Mammary epithelial cell (primary cell): ENCODE measurements at regions of chr13 and their contacts with region 1.

Region 1: GRCh38 chr13:30998136-30999088 is 66.0 kb downstream of the TEX26 start:
- DNase-seq: peak; percentile 21
- H3K4me3 ChIP-seq: no peak overlapping the region
- H3K27ac ChIP-seq: no peak overlapping the region
- H3K4me1 ChIP-seq: no peaks in the 10 kb centered on the region
- H3K27me3 ChIP-seq: peaks cover 11% of the 10 kb centered on the region
- CTCF ChIP-seq: no peak

Region 2: GRCh38 chr13:30898678-30899241 is 99.7 kb before region 1 on chr13:
- CTCF ChIA-PET with region 1: no interaction called
- dilution Hi-C with region 1: loop called (anchors 5 kb)
- in situ Hi-C with region 1: no loop called
- intact Hi-C with region 1: no loop called
- DNase-seq: peak; percentile 22
- H3K4me3 ChIP-seq: no peak overlapping the region
- H3K27ac ChIP-seq: no peak overlapping the region
- H3K4me1 ChIP-seq: peaks cover 3% of the 10 kb centered on the region
- H3K27me3 ChIP-seq: peaks cover under 1% of the 10 kb centered on the region
- CTCF ChIP-seq: no peak

Region 3: DNA sequence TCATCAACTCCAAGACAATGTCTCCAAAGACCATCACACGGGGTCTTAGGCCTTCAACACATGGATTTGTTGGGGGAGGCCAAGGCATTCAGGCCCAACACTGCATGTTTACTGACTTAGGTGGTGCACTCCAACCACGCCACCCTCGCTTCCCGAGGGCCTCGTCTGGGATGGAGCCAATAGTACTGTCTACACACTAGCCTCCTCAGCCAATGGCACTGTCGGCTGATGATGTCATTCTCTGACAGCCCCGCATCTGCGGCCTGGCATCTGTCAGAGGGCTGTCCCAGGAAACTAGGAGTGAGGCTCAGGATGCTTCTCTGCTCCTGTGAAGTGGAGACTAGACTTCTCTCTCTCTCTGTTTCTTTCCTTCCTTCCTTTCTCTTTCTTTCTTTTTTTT is 30.7 kb after region 1 on chr13:
- CTCF ChIA-PET with region 1: no interaction called
- dilution Hi-C with region 1: no loop called
- in situ Hi-C with region 1: no loop called
- intact Hi-C with region 1: no loop called
- DNase-seq: no peak
- H3K4me3 ChIP-seq: no peak overlapping the region
- H3K27ac ChIP-seq: no peak overlapping the region
- H3K4me1 ChIP-seq: peaks cover 9% of the 10 kb centered on the region
- H3K27me3 ChIP-seq: no peaks in the 10 kb centered on the region
- CTCF ChIP-seq: no peak

Region 4: GRCh38 chr13:31044377-31045285 is 46.2 kb after region 1 on chr13:
- CTCF ChIA-PET with region 1: no interaction called
- dilution Hi-C with region 1: no loop called
- in situ Hi-C with region 1: no loop called
- intact Hi-C with region 1: no loop called
- DNase-seq: peak; percentile 72
- H3K4me3 ChIP-seq: no peak overlapping the region
- H3K27ac ChIP-seq: peak overlapping the region; percentile 74
- H3K4me1 ChIP-seq: peaks cover 32% of the 10 kb centered on the region
- H3K27me3 ChIP-seq: no peaks in the 10 kb centered on the region
- CTCF ChIP-seq: peak; percentile 97 to 98